Motor neuron (in vitro differentiated cells): ENCODE measurements at regions of chr19 and their contacts with region 1.

Region 1: GRCh38 chr19:42132851-42133528 is 744 bp upstream of the POU2F2 start:
- ATAC-seq: peak; percentile 2 to 85 (median 60)
- H3K4me3 ChIP-seq: peak overlapping the region in 3 of 5 donors; percentile 18 to 26 (median 20)
- H3K27ac ChIP-seq: peak overlapping the region in 1 of 2 donors; percentile 17
- H3K4me1 ChIP-seq: peaks cover 42 to 48% of the 10 kb centered on the region in 2 donors

Region 2: DNA sequence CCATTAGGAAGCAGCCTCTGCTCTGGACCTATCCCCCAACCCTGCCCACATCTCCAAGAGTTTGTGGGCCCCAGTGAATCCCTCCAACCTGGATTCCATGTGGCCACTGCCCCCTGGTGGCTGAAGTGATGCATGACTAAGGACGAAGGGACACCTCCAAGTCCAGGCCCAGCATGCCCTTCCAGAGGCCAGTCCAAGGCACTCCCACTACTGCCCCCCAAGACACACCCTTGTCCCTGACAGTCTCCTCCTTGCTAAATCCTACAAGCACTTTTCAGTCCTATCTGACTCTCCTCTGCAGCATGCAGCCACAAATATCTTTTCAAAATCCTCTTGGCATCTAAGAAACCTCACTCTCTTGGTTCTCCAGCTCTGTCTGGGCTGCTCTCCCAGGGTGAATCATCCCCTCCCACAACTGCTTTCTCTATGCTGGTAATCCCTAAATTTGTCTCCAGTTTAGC is 51.4 kb after region 1 on chr19:
- in situ Hi-C with region 1: loop called in 2 of 9 experiments (anchors 10 kb)
- ATAC-seq: peak; percentile 76 to 96 (median 82)
- H3K4me3 ChIP-seq: no peak overlapping the region
- H3K27ac ChIP-seq: no peak overlapping the region
- H3K4me1 ChIP-seq: peaks cover 5 to 15% of the 10 kb centered on the region in 2 donors